ENCODE measurements at regions of chr13 and their contacts with region 1.

Region 1: DNA sequence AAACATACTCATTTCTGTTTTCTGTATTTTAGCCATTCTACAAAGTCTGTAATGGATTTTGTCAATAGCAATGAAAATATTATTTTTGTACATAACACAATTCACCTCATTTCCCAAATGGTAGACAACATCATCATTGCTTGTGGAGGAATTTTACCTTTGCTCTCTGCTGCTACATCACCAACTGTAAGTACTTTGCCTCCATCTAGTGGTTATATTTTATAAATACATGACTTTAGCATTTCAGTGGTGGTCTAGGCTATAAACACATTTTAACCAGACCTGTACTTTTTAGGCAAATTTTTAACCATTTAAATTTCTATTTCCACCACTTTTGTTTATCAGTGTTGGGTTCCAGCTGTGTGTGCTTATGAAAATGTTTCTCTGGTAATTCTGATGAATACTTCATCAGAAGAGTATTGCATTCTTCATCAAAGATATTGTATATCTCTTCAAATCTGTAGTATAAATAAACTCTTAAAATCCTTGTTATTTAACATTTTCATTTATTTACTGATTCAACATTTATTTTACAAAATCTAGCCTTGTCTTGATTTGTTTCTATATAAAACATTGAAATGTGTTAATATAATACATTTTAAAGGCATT is 222.4 kb downstream of the NBEA start:
- DNase-seq: no peak
- ATAC-seq: peak; percentile 68
- H3K4me3 ChIP-seq: no peak overlapping the region
- H3K27ac ChIP-seq: no peak overlapping the region
- H3K4me1 ChIP-seq: no peaks in the 10 kb centered on the region
- H3K27me3 ChIP-seq: peaks cover 0 to 5% of the 10 kb centered on the region in 2 donors
- CTCF ChIP-seq: peak; percentile 37 to 68 (median 63)
- POLR2A ChIP-seq: no peak

Region 2: DNA sequence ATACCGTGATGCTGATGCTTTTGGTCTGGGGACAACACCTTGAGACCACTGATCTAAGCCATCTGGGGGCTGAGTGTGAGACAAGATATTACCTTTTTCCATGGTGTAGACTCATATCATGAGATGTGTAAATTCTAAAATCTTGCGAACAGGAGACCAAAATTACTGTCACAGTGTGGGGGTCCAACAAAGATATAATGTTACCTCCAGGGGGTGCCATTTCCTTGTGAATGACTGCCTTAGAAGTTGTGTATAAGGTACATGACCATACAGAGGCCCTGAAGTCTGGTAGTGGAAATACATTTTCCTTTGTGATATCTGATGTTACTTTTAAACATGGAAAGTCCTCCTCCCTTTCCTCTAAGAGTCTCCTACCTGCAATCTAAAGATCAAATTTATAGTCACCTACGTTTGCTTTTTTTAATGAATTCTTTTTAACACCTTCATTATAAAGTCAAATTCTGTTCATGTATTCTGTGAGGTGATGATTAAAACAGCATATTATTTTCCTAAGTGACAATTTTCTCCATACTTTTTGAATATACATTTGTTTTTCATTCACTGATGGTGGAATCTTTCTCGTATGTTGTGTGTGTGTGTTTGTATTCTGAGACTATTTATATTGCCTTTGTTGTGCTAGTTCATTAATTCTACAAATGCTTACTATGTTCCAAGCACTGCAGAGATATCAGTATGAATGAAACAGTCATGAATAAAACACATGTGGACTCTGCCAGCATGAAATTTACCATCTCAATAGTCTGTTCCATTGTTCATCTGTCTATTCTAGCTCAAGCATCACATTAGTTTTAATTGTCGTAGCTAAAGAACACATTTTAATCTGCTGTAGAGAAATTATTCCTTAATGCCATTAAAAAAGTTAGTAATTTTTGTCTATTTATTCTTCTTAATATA is 1232.8 kb before region 1 on chr13:
- intact Hi-C with region 1: loop called (anchors 10 kb)
- DNase-seq: peak in 2 of 4 donors; percentile 13 to 34
- ATAC-seq: peak; percentile 60
- H3K4me3 ChIP-seq: no peak overlapping the region
- H3K27ac ChIP-seq: no peak overlapping the region
- H3K4me1 ChIP-seq: peaks cover 8% of the 10 kb centered on the region
- H3K27me3 ChIP-seq: no peaks in the 10 kb centered on the region
- CTCF ChIP-seq: peak in 6 of 7 experiments; percentile 25 to 59 (median 54)
- POLR2A ChIP-seq: no peak

Measured in body of pancreas (tissue), 4 donors.